ENCODE measurements at regions of chr1 and their contacts with region 1.

Region 1: GRCh38 chr1:169193191-169193850 is 86.8 kb downstream of the ATP1B1 start:
- DNase-seq: peak in 4 of 5 donors; percentile 18 to 53 (median 30)
- ATAC-seq: peak; percentile 93 to 96 (median 94)
- H3K4me3 ChIP-seq: no peak overlapping the region
- H3K27ac ChIP-seq: peak overlapping the region in 4 of 12 donors; percentile 15 to 53 (median 24)
- H3K4me1 ChIP-seq: peaks cover 0 to 12% (median 0%) of the 10 kb centered on the region in 12 donors
- H3K27me3 ChIP-seq: no peaks in the 10 kb centered on the region
- CTCF ChIP-seq: peak in 8 of 12 donors; percentile 14 to 58 (median 41)
- POLR2A ChIP-seq: no peak

Region 2: DNA sequence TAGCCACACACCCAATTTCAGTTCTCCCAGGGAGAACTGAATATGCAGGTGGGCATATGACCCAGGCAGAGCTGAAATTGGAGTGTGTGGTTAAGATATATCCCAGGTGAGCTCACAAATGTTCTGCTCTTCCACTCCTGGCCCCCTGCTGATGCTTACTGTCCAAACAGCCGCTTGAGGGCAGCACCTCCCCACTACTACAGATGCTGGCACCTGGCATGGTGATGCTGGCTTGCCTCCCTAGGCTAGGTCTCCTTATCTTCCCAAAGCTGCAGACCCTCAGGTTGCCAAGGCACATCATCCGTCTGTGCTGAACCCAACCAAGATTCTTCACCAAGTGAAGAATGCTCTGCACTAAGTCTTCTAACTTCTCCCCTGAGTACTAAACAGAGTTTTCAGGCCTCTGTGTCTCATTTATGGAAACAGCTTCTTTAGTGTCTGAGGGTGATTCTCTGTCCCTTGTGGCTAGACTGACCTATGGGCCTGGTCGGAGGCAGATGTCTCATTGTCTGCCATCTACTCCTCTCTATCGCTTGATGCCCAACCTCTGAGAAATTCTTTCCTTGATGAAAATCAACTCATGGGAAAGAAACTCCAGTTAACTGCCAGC is 589.7 kb before region 1 on chr1:
- intact Hi-C with region 1: loop called in 5 of 10 experiments (anchors 1 to 10 kb)
- DNase-seq: peak; percentile 69 to 86 (median 79)
- ATAC-seq: peak; percentile 63 to 91 (median 90)
- H3K4me3 ChIP-seq: no peak overlapping the region
- H3K27ac ChIP-seq: no peak overlapping the region
- H3K4me1 ChIP-seq: peaks cover 0 to 17% (median under 1%) of the 10 kb centered on the region in 12 donors
- H3K27me3 ChIP-seq: no peaks in the 10 kb centered on the region
- CTCF ChIP-seq: peak; percentile 68 to 90 (median 82)
- POLR2A ChIP-seq: no peak

Region 3: GRCh38 chr1:168783458-168784230 is 409.7 kb before region 1 on chr1:
- intact Hi-C with region 1: no loop called
- DNase-seq: peak in 1 of 5 donors; percentile 41
- ATAC-seq: peak; percentile 61 to 87 (median 78)
- H3K4me3 ChIP-seq: no peak overlapping the region
- H3K27ac ChIP-seq: peak overlapping the region in 4 of 12 donors; percentile 7 to 27 (median 15)
- H3K4me1 ChIP-seq: peaks cover 0 to 7% (median 0%) of the 10 kb centered on the region in 12 donors
- H3K27me3 ChIP-seq: no peaks in the 10 kb centered on the region
- CTCF ChIP-seq: no peak
- POLR2A ChIP-seq: no peak

Region 4: DNA sequence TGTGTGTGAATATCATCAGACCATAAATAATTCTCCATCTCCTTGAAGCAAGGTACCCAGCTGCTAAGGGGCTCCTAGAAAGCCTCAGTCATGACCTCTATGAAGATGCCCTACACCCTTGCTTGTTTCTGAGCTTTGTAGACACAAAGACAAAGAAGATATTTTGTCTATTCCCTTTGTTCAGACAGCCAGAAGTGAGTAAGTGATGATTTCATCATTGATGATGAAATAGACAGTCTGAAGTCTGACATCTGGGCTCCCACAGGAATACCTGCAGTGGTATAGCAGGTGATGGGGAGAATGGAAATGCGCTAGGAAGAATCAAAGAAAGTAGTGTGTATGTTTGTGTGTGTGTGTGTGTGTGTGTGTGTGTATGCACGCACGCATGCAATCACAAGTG is 382.1 kb before region 1 on chr1:
- intact Hi-C with region 1: no loop called
- DNase-seq: no peak
- ATAC-seq: no peak
- H3K4me3 ChIP-seq: no peak overlapping the region
- H3K27ac ChIP-seq: no peak overlapping the region
- H3K4me1 ChIP-seq: no peaks in the 10 kb centered on the region
- H3K27me3 ChIP-seq: no peaks in the 10 kb centered on the region
- CTCF ChIP-seq: no peak
- POLR2A ChIP-seq: no peak

Region 5: GRCh38 chr1:169161496-169162194 is 31.7 kb before region 1 on chr1:
- intact Hi-C with region 1: loop called in 1 of 10 experiments (anchors 2 kb)
- DNase-seq: no peak
- ATAC-seq: peak in 1 of 4 donors; percentile 36
- H3K4me3 ChIP-seq: no peak overlapping the region
- H3K27ac ChIP-seq: peak overlapping the region in 6 of 12 donors; percentile 6 to 72 (median 26)
- H3K4me1 ChIP-seq: peaks cover 0 to 12% (median 0%) of the 10 kb centered on the region in 12 donors
- H3K27me3 ChIP-seq: no peaks in the 10 kb centered on the region
- CTCF ChIP-seq: no peak
- POLR2A ChIP-seq: no peak

Measured in heart left ventricle (tissue), 16 donors.